ENCODE measurements at regions of chr12 and their contacts with region 1.

Region 1: DNA sequence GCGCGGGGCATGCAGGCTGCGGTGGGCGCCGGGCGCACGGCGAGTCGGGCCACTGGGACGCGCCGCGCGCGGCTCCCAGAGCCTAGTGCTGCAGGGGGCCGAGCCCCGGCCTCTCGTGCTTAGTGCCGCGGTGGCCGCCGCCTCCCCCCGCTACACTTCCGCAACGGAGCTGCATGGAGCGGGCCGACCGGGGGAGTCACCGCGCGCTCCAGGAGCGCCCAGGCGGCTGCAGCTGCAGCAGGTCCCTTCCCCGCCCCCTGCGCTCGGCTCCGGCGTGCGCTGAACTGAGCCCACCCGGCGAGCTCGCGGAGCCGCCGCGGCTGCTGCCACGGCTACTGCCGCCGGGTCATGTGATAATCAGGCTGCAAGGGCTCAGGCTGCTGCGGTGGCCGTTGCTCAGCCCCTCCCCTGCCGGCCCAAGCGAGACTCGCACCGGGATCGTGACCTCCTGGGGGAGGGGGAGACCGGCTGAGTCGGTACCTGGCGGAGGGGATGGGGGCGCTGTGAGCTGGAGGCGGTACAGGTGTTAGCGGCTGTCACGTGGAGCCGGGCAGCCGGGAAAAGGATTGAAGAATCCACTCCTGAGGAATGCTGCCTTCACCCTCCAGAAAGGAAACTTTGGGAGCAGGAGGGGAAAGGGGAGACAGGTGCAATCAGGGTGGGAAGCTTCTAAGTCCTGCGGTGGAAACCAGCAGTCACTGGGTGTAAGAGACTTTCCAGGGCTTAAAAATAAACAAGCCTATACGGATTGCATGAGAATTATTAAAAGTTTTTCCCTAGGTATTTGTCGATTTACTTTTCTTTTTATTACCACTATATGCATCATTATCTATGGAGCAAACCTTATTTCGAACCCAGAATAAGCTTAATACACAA is at the start of gene PPM1H:
- DNase-seq: peak; percentile 86
- ATAC-seq: peak; percentile 89
- total RNA-seq, gene PPM1H: 8.3 TPM

Region 2: GRCh38 chr12:62866451-62867082 is 68.5 kb before region 1 on chr12:
- intact Hi-C with region 1: loop called (anchors 5 kb)
- DNase-seq: no peak
- ATAC-seq: peak; percentile 23

Measured in Right ventricle myocardium inferior (tissue), 1 donor.